ENCODE measurements at regions of chr1 and their contacts with region 1.

Region 1: DNA sequence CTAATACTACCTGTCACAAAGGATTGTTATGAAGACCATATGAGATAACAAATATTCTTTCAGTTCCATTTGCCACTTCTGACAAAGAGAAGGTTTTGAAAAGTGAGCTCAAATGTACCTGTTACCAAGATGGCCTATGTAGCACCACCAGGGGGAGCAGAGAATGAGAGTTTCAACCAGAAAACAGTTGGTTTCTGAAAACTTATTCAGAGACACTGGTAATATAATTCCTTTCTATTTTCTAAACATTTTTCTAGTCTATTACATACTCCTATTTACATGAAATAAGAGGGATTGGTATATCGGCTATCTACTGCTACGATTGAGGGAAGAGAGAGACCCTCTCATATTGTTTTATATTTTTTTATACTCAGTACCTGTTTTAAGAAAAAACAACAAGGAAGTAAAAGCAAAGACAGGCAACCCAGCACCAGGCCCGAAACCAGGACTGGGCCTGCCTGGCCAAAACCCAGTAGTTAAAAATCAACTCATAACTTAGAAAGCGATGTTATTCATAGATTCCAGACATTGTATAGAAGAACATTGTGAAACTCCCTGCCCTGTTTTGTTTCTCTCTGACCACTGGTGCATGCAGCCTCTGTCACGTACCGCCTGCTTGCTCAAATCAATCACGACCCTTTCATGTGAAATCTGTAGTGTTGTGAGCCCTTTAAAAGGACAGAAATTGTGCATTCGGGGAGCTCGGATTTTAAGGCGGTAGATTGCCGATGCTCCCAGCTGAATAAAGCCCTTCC is 48.3 kb downstream of the IL23R start:
- DNase-seq: peak in 7 of 9 experiments; percentile 11 to 66 (median 45)
- ATAC-seq: peak; percentile 55
- H3K4me3 ChIP-seq: no peak overlapping the region
- H3K4me3 Mint-ChIP-seq: no peak overlapping the region
- H3K27ac ChIP-seq: no peak overlapping the region
- H3K27ac Mint-ChIP-seq: no peak overlapping the region
- H3K4me1 ChIP-seq: peaks cover 10% of the 10 kb centered on the region
- H3K4me1 Mint-ChIP-seq: peaks cover 17% of the 10 kb centered on the region
- H3K27me3 ChIP-seq: no peaks in the 10 kb centered on the region
- H3K27me3 Mint-ChIP-seq: no peaks in the 10 kb centered on the region
- CTCF ChIP-seq: peak; percentile 65

Region 2: DNA sequence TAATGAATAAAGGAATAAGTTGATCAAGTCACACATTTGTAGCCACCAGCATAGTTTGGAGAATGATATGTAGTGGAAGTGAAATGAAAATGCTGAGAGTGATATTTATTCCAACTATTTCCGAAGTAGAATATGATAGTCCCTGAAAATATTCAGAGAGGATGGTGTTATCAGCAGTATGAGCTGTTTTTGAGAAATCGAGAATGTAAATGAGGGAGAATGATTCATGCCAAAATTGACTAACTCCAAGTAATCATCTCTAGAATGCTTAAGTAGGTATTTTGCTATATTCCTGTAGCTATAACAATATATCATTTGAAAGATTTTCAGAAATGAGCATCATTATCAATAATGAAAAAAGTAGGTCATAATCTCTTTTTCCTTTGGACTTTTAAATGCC is 1243.0 kb before region 1 on chr1:
- CTCF ChIA-PET with region 1: no interaction called
- POLR2A ChIA-PET with region 1: no interaction called
- intact Hi-C with region 1: no loop called
- DNase-seq: no peak
- ATAC-seq: no peak
- H3K4me3 ChIP-seq: no peak overlapping the region
- H3K4me3 Mint-ChIP-seq: no peak overlapping the region
- H3K27ac ChIP-seq: no peak overlapping the region
- H3K27ac Mint-ChIP-seq: no peak overlapping the region
- H3K4me1 ChIP-seq: no peaks in the 10 kb centered on the region
- H3K4me1 Mint-ChIP-seq: no peaks in the 10 kb centered on the region
- H3K27me3 ChIP-seq: no peaks in the 10 kb centered on the region
- H3K27me3 Mint-ChIP-seq: peaks cover 4% of the 10 kb centered on the region
- CTCF ChIP-seq: no peak

Region 3: GRCh38 chr1:66764994-66765578 is 449.5 kb before region 1 on chr1:
- CTCF ChIA-PET with region 1: interaction called, 24 read pairs
- POLR2A ChIA-PET with region 1: no interaction called
- intact Hi-C with region 1: loop called (anchors 1 to 2 kb)
- DNase-seq: peak; percentile 5 to 73 (median 53)
- ATAC-seq: peak; percentile 83
- H3K4me3 ChIP-seq: no peak overlapping the region
- H3K4me3 Mint-ChIP-seq: no peak overlapping the region
- H3K27ac ChIP-seq: no peak overlapping the region
- H3K27ac Mint-ChIP-seq: no peak overlapping the region
- H3K4me1 ChIP-seq: no peaks in the 10 kb centered on the region
- H3K4me1 Mint-ChIP-seq: peaks cover 15% of the 10 kb centered on the region
- H3K27me3 ChIP-seq: no peaks in the 10 kb centered on the region
- H3K27me3 Mint-ChIP-seq: no peaks in the 10 kb centered on the region
- CTCF ChIP-seq: peak; percentile 84

Region 4: GRCh38 chr1:67162957-67163356 is 51.6 kb before region 1 on chr1:
- CTCF ChIA-PET with region 1: interaction called, 43 read pairs
- POLR2A ChIA-PET with region 1: no interaction called
- intact Hi-C with region 1: no loop called
- DNase-seq: peak in 3 of 9 experiments; percentile 13 to 27 (median 22)
- ATAC-seq: peak; percentile 60
- H3K4me3 ChIP-seq: no peak overlapping the region
- H3K4me3 Mint-ChIP-seq: no peak overlapping the region
- H3K27ac ChIP-seq: no peak overlapping the region
- H3K27ac Mint-ChIP-seq: no peak overlapping the region
- H3K4me1 ChIP-seq: no peaks in the 10 kb centered on the region
- H3K4me1 Mint-ChIP-seq: peaks cover 7% of the 10 kb centered on the region
- H3K27me3 ChIP-seq: no peaks in the 10 kb centered on the region
- H3K27me3 Mint-ChIP-seq: peaks cover 3% of the 10 kb centered on the region
- CTCF ChIP-seq: no peak

Region 5: GRCh38 chr1:67201891-67202290 is 12.7 kb before region 1 on chr1:
- CTCF ChIA-PET with region 1: interaction called, 10 read pairs
- POLR2A ChIA-PET with region 1: interaction called, 3 read pairs
- intact Hi-C with region 1: no loop called
- DNase-seq: no peak
- ATAC-seq: no peak
- H3K4me3 ChIP-seq: no peak overlapping the region
- H3K4me3 Mint-ChIP-seq: no peak overlapping the region
- H3K27ac ChIP-seq: no peak overlapping the region
- H3K27ac Mint-ChIP-seq: no peak overlapping the region
- H3K4me1 ChIP-seq: no peaks in the 10 kb centered on the region
- H3K4me1 Mint-ChIP-seq: peaks cover under 1% of the 10 kb centered on the region
- H3K27me3 ChIP-seq: no peaks in the 10 kb centered on the region
- H3K27me3 Mint-ChIP-seq: no peaks in the 10 kb centered on the region
- CTCF ChIP-seq: no peak

Region 6: GRCh38 chr1:67500413-67500959 is 285.9 kb after region 1 on chr1:
- CTCF ChIA-PET with region 1: interaction called, 89 read pairs
- POLR2A ChIA-PET with region 1: interaction called, 4 read pairs
- intact Hi-C with region 1: loop called (anchors 1 kb)
- DNase-seq: peak; percentile 73 to 91 (median 81)
- ATAC-seq: peak; percentile 100
- H3K4me3 ChIP-seq: no peak overlapping the region
- H3K4me3 Mint-ChIP-seq: no peak overlapping the region
- H3K27ac ChIP-seq: no peak overlapping the region
- H3K27ac Mint-ChIP-seq: no peak overlapping the region
- H3K4me1 ChIP-seq: no peaks in the 10 kb centered on the region
- H3K4me1 Mint-ChIP-seq: peaks cover 4% of the 10 kb centered on the region
- H3K27me3 ChIP-seq: peaks cover 0 to 7% of the 10 kb centered on the region in 2 experiments
- H3K27me3 Mint-ChIP-seq: peaks cover 13% of the 10 kb centered on the region
- CTCF ChIP-seq: peak; percentile 95

Measured in CD8-positive, alpha-beta T cell (primary cell).